Stomach (tissue), 19 donors: ENCODE measurements at regions of chr2 and their contacts with region 1.

Region 1: GRCh38 chr2:232438951-232439757 is 16.8 kb upstream of the ALPI start:
- DNase-seq: peak; percentile 50 to 53
- H3K4me3 ChIP-seq: no peak overlapping the region
- H3K27ac ChIP-seq: no peak overlapping the region
- H3K4me1 ChIP-seq: peaks cover 0 to 5% (median 0%) of the 10 kb centered on the region in 4 donors
- H3K27me3 ChIP-seq: peaks cover 0 to 14% (median 3%) of the 10 kb centered on the region in 3 donors
- CTCF ChIP-seq: peak in 4 of 7 experiments; percentile 7 to 66 (median 45)
- EP300 ChIP-seq: no peak
- POLR2A ChIP-seq: no peak

Region 2: GRCh38 chr2:231905026-231905425 is 534.1 kb before region 1 on chr2:
- intact Hi-C with region 1: loop called (anchors 5 kb)
- DNase-seq: no peak
- H3K4me3 ChIP-seq: no peak overlapping the region
- H3K27ac ChIP-seq: no peak overlapping the region
- H3K4me1 ChIP-seq: peaks cover 0 to 4% (median 2%) of the 10 kb centered on the region in 4 donors
- H3K27me3 ChIP-seq: peaks cover 0 to 27% (median 0%) of the 10 kb centered on the region in 3 donors
- CTCF ChIP-seq: no peak
- EP300 ChIP-seq: no peak
- POLR2A ChIP-seq: no peak

Region 3: GRCh38 chr2:232142049-232142448 is 297.1 kb before region 1 on chr2:
- intact Hi-C with region 1: no loop called
- DNase-seq: peak in 1 of 2 donors; percentile 72
- H3K4me3 ChIP-seq: no peak overlapping the region
- H3K27ac ChIP-seq: no peak overlapping the region
- H3K4me1 ChIP-seq: no peaks in the 10 kb centered on the region
- H3K27me3 ChIP-seq: no peaks in the 10 kb centered on the region
- CTCF ChIP-seq: peak in 5 of 7 experiments; percentile 34 to 63 (median 42)
- EP300 ChIP-seq: no peak
- POLR2A ChIP-seq: no peak

Region 4: GRCh38 chr2:232211743-232212686 is 227.1 kb before region 1 on chr2:
- intact Hi-C with region 1: no loop called
- DNase-seq: peak; percentile 55 to 65
- H3K4me3 ChIP-seq: no peak overlapping the region
- H3K27ac ChIP-seq: peak overlapping the region in 1 of 5 donors; percentile 53
- H3K4me1 ChIP-seq: peaks cover 13 to 20% (median 17%) of the 10 kb centered on the region in 4 donors
- H3K27me3 ChIP-seq: no peaks in the 10 kb centered on the region
- CTCF ChIP-seq: no peak
- EP300 ChIP-seq: no peak
- POLR2A ChIP-seq: no peak

Region 5: GRCh38 chr2:232521959-232522622 is 82.9 kb after region 1 on chr2:
- intact Hi-C with region 1: loop called (anchors 5 kb)
- DNase-seq: peak; percentile 66 to 80
- H3K4me3 ChIP-seq: peak overlapping the region; percentile 20 to 49 (median 32)
- H3K27ac ChIP-seq: no peak overlapping the region
- H3K4me1 ChIP-seq: peaks cover 34 to 47% (median 38%) of the 10 kb centered on the region in 4 donors
- H3K27me3 ChIP-seq: peaks cover 32 to 95% (median 70%) of the 10 kb centered on the region in 3 donors
- CTCF ChIP-seq: peak in 5 of 7 experiments; percentile 15 to 94 (median 86)
- EP300 ChIP-seq: no peak
- POLR2A ChIP-seq: no peak